ENCODE measurements at regions of chr11 and their contacts with region 1.

Region 1: GRCh38 chr11:59822989-59823566 is 12.5 kb upstream of the MRPL16 start:
- DNase-seq: peak in 1 of 2 donors; percentile 64
- ATAC-seq: peak; percentile 83 to 92 (median 92)
- H3K4me3 ChIP-seq: no peak overlapping the region
- H3K4me3 Mint-ChIP-seq: no peak overlapping the region
- H3K27ac ChIP-seq: no peak overlapping the region
- H3K27ac Mint-ChIP-seq: no peak overlapping the region
- H3K4me1 ChIP-seq: peaks cover 6% of the 10 kb centered on the region
- H3K4me1 Mint-ChIP-seq: peaks cover 5 to 6% of the 10 kb centered on the region in 2 donors
- H3K27me3 ChIP-seq: no peaks in the 10 kb centered on the region
- H3K27me3 Mint-ChIP-seq: peaks cover 7 to 10% of the 10 kb centered on the region in 2 donors
- CTCF ChIP-seq: peak; percentile 76

Region 2: GRCh38 chr11:59918987-59919589 is 96.0 kb after region 1 on chr11:
- intact Hi-C with region 1: loop called (anchors 1 kb)
- DNase-seq: peak in 1 of 2 donors; percentile 31
- ATAC-seq: no peak
- H3K4me3 ChIP-seq: no peak overlapping the region
- H3K4me3 Mint-ChIP-seq: no peak overlapping the region
- H3K27ac ChIP-seq: no peak overlapping the region
- H3K27ac Mint-ChIP-seq: no peak overlapping the region
- H3K4me1 ChIP-seq: no peaks in the 10 kb centered on the region
- H3K4me1 Mint-ChIP-seq: no peaks in the 10 kb centered on the region
- H3K27me3 ChIP-seq: no peaks in the 10 kb centered on the region
- H3K27me3 Mint-ChIP-seq: peaks cover 0 to 6% of the 10 kb centered on the region in 2 donors
- CTCF ChIP-seq: peak; percentile 43

Region 3: GRCh38 chr11:60130496-60130895 is 307.4 kb after region 1 on chr11:
- intact Hi-C with region 1: loop called (anchors 5 kb)
- DNase-seq: peak in 1 of 2 donors; percentile 27
- ATAC-seq: no peak
- H3K4me3 ChIP-seq: no peak overlapping the region
- H3K4me3 Mint-ChIP-seq: no peak overlapping the region
- H3K27ac ChIP-seq: no peak overlapping the region
- H3K27ac Mint-ChIP-seq: no peak overlapping the region
- H3K4me1 ChIP-seq: no peaks in the 10 kb centered on the region
- H3K4me1 Mint-ChIP-seq: no peaks in the 10 kb centered on the region
- H3K27me3 ChIP-seq: no peaks in the 10 kb centered on the region
- H3K27me3 Mint-ChIP-seq: peaks cover 2 to 9% of the 10 kb centered on the region in 2 donors
- CTCF ChIP-seq: no peak

Region 4: DNA sequence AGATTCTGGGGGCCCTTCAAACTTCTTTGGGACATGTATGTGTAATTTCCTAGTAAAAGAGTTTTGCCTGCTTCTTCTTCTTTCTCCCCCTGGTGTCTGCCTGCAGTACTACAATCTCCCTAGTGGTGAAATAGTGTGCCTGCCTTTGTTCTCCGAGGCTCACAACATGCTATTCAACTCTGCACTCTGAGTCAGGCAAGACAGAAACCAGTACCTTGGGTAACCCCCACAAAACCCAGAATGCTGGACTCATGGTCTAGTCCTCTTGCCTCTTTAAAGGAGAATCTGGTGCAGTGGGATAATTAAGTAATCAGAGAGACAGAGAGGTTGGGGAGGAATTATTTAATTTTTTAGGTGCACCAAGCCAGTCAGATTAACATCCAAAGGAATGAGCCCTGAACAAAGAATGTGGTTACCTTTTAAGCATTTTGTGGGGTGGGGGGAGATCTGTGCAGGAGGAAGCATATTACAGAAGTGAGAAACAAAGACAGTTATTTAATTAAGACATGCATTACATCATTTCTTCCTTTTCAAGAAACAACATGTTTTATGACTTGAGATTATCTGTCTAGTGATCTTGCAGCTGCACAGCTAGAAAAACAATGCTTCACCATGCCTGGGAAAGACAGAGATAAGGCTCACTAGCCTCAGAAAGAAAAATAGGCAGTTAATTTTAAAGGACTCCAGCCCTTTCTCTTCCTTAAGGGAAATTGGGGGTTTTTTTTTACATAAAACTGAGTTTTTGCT is 370.8 kb after region 1 on chr11:
- intact Hi-C with region 1: loop called (anchors 1 kb)
- DNase-seq: peak; percentile 40 to 68
- ATAC-seq: peak; percentile 66 to 76 (median 73)
- H3K4me3 ChIP-seq: no peak overlapping the region
- H3K4me3 Mint-ChIP-seq: no peak overlapping the region
- H3K27ac ChIP-seq: no peak overlapping the region
- H3K27ac Mint-ChIP-seq: no peak overlapping the region
- H3K4me1 ChIP-seq: no peaks in the 10 kb centered on the region
- H3K4me1 Mint-ChIP-seq: peaks cover 0 to 4% of the 10 kb centered on the region in 2 donors
- H3K27me3 ChIP-seq: peaks cover 2% of the 10 kb centered on the region
- H3K27me3 Mint-ChIP-seq: peaks cover 14 to 16% of the 10 kb centered on the region in 2 donors
- CTCF ChIP-seq: peak; percentile 89

Measured in natural killer cell (primary cell).